AG04449 (cell line): ENCODE measurements at regions of chr17 and their contacts with region 1.

Region 1: DNA sequence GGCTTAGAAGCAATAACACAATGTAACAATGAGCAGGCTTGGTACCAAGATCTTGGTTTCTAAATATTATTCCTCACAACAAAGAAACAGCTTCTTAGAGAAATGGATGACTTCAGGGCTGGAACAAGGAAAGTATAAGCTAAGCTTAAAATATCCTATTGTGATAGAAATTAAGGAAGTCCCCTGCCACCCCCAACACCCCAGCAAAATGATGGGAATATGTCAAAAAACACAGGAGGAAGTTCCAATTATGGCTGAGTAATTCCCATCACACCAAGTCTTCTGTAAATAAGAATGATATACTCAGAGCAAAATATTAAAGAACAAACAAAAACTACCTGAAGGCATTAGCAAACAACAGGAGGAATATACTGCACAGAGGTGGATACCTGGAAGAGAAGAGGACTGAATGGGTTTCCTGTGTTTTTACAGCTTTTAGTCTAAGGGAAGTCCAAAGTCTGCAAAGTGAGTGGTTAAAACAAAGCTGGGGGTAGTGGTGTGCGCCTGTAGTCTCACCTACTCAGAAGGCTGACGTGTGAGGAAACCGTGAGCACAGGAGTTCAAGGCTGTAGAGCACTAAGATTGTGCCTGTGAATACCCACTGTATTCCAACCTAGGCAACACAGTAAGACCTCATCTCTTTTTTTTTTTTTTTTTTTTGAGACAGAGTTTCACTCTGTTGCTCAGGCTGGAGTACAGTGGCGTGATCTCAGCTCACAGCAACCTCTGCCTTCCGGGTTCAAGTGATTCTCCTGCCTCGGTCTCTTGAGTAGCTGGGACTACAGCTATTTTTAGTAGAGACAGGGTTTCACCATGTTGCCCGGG is 17.1 kb upstream of the ATP6V0A1 start:
- DNase-seq: no peak
- H3K4me3 ChIP-seq: no peak overlapping the region
- CTCF ChIP-seq: no peak

Region 2: GRCh38 chr17:42312285-42313130 is 129.1 kb before region 1 on chr17:
- CTCF ChIA-PET with region 1: no interaction called
- POLR2A ChIA-PET with region 1: no interaction called
- DNase-seq: no peak
- H3K4me3 ChIP-seq: no peak overlapping the region
- CTCF ChIP-seq: peak; percentile 89

Region 3: GRCh38 chr17:42347198-42347597 is 94.4 kb before region 1 on chr17:
- CTCF ChIA-PET with region 1: no interaction called
- POLR2A ChIA-PET with region 1: no interaction called
- DNase-seq: no peak
- H3K4me3 ChIP-seq: no peak overlapping the region
- CTCF ChIP-seq: no peak

Region 4: DNA sequence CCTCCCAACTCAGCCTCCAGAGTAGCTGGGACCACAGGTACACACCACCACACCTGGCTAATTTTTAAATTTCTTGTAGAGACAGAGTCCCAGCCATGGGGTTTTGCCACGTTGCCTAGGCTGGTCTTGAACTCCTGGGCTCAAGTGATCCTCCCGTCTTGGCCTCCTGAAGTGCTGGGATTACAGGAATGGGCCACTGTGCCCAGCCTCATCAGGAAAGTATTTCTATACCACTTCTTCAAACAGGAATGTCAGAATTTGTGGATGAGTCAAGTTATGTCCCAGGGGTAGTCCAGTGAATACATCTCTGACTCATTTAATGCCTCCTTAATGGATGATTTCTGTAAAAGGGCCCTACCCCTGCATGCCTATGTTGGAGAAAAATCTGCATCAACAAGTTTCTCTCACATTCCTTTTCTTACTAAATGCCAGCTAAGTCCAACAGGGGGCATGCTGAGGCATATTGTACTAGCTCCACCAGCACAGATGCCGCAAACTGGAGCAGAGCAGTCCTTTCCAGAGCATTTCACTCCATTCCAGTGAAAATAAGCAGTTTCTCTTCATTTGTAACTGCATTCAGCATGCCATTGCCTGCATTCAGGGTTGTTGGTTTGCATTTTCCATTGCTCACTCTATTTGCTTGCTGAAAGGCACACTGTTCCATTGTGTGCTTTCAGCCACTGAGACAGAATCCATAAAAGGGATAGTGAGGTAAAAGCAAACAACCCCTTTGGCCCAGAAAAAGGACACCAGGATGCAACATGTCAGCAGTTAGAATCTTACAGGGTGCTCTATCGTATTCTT is 13.2 kb before region 1 on chr17:
- CTCF ChIA-PET with region 1: interaction called, 10 read pairs
- POLR2A ChIA-PET with region 1: interaction called, 14 read pairs
- DNase-seq: peak; percentile 98
- H3K4me3 ChIP-seq: no peak overlapping the region
- CTCF ChIP-seq: peak; percentile 79